MCF 10A (cell line): ENCODE measurements at regions of chr2 and their contacts with region 1.

Region 1: GRCh38 chr2:237165405-237166276 is 80.0 kb downstream of the COPS8 start:
- DNase-seq: peak; percentile 55
- H3K4me3 Mint-ChIP-seq: no peak overlapping the region
- H3K27ac Mint-ChIP-seq: peak overlapping the region; percentile 2
- H3K4me1 Mint-ChIP-seq: peaks cover 7% of the 10 kb centered on the region
- H3K27me3 Mint-ChIP-seq: no peaks in the 10 kb centered on the region
- CTCF ChIP-seq: peak; percentile 31

Region 2: DNA sequence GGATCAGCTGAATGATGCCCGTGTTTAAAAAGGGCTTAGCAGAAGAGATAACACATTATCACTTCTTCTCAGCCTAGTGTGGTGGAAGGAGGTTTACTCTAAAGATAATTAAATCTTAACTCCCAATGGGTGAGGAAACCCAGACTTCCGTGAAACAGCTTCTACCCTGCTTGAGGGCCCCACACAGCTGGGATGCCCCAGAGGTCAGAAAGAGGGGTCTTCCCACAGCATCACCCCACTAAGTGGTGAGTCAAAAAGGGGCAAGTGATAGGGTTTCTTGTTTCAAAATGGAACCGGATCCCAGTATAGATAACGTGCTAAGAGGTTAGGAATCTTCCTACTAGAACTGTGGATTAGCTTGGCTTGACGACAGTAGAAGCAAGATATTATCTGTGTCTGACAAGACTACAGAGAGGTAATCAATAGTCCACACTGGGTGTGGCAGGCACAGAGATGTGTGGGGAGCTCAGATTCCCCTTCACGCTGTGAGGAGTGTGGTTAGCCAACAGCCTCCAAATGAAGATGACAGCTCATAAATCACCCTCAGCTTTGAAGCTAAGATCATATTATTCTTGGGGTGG is 209.5 kb before region 1 on chr2:
- CTCF ChIA-PET with region 1: no interaction called
- POLR2A ChIA-PET with region 1: no interaction called
- intact Hi-C with region 1: no loop called
- DNase-seq: no peak
- H3K4me3 Mint-ChIP-seq: no peak overlapping the region
- H3K27ac Mint-ChIP-seq: no peak overlapping the region
- H3K4me1 Mint-ChIP-seq: peaks cover 8% of the 10 kb centered on the region
- H3K27me3 Mint-ChIP-seq: peaks cover 13% of the 10 kb centered on the region
- CTCF ChIP-seq: no peak

Region 3: GRCh38 chr2:237081596-237081995 is 84.0 kb before region 1 on chr2:
- CTCF ChIA-PET with region 1: no interaction called
- POLR2A ChIA-PET with region 1: no interaction called
- intact Hi-C with region 1: no loop called
- DNase-seq: no peak
- H3K4me3 Mint-ChIP-seq: no peak overlapping the region
- H3K27ac Mint-ChIP-seq: no peak overlapping the region
- H3K4me1 Mint-ChIP-seq: peaks cover 6% of the 10 kb centered on the region
- H3K27me3 Mint-ChIP-seq: no peaks in the 10 kb centered on the region
- CTCF ChIP-seq: no peak

Region 4: GRCh38 chr2:237122214-237122666 is 43.4 kb before region 1 on chr2:
- CTCF ChIA-PET with region 1: interaction called, 4 read pairs
- POLR2A ChIA-PET with region 1: interaction called, 3 read pairs
- intact Hi-C with region 1: loop called (anchors 5 kb)
- DNase-seq: peak; percentile 82
- H3K4me3 Mint-ChIP-seq: no peak overlapping the region
- H3K27ac Mint-ChIP-seq: peak overlapping the region; percentile 82
- H3K4me1 Mint-ChIP-seq: peaks cover 25% of the 10 kb centered on the region
- H3K27me3 Mint-ChIP-seq: no peaks in the 10 kb centered on the region
- CTCF ChIP-seq: peak; percentile 80

Region 5: GRCh38 chr2:237154082-237154638 is 11.5 kb before region 1 on chr2:
- CTCF ChIA-PET with region 1: no interaction called
- POLR2A ChIA-PET with region 1: no interaction called
- intact Hi-C with region 1: no loop called
- DNase-seq: peak; percentile 68
- H3K4me3 Mint-ChIP-seq: no peak overlapping the region
- H3K27ac Mint-ChIP-seq: no peak overlapping the region
- H3K4me1 Mint-ChIP-seq: peaks cover 8% of the 10 kb centered on the region
- H3K27me3 Mint-ChIP-seq: no peaks in the 10 kb centered on the region
- CTCF ChIP-seq: peak; percentile 34

Region 6: GRCh38 chr2:237530472-237531433 is 365.1 kb after region 1 on chr2:
- CTCF ChIA-PET with region 1: no interaction called
- POLR2A ChIA-PET with region 1: no interaction called
- intact Hi-C with region 1: no loop called
- DNase-seq: no peak
- H3K4me3 Mint-ChIP-seq: no peak overlapping the region
- H3K27ac Mint-ChIP-seq: no peak overlapping the region
- H3K4me1 Mint-ChIP-seq: no peaks in the 10 kb centered on the region
- H3K27me3 Mint-ChIP-seq: no peaks in the 10 kb centered on the region
- CTCF ChIP-seq: no peak